ENCODE measurements at regions of chr14 and their contacts with region 1.

Region 1: GRCh38 chr14:55191203-55192053 is at the start of gene DLGAP5:
- DNase-seq: peak; percentile 92 to 94
- H3K4me3 ChIP-seq: peak within 1 kb of the TSS; percentile 79
- H3K27ac ChIP-seq: no peak within 1 kb of the TSS
- H3K4me1 ChIP-seq: peaks cover 18% of the 10 kb centered on the region
- H3K27me3 ChIP-seq: no peaks in the 10 kb centered on the region
- CTCF ChIP-seq: no peak
- total RNA-seq, gene DLGAP5: 51.7 and 80.0 TPM in 2 replicates

Region 2: DNA sequence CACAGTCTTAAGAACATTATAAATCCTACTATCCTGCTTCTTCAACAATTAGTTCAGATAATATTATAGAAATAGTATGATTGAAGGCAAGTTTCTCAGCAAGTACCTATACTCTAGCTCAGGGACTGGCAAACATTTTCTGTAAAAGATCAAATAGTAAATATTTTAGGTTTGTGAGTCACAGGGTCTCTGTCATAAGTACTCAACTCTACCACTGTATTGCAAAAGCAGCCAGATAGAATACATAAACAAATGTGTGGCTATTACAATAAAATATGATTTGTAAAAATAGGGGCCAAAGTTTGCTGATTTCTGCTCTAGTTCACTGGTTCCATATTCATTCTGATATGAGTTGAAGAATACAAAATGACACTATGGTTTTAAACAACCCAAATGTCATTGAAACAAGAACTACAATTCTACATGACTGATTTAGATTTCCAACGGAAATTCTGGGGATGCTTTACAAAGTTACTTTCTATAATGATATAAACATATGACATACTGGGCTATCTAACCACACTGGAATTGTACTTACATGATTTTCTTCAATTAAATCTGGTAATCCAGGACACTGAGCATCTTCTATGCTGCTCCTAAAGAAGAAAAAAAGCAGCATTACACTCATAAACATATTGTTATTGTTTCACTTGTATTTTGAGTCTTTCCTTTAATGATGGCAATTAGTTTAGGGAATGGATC is 39.2 kb before region 1 on chr14:
- CTCF ChIA-PET with region 1: no interaction called
- POLR2A ChIA-PET with region 1: no interaction called
- intact Hi-C with region 1: no loop called
- DNase-seq: no peak
- H3K4me3 ChIP-seq: no peak overlapping the region
- H3K27ac ChIP-seq: no peak overlapping the region
- H3K4me1 ChIP-seq: no peaks in the 10 kb centered on the region
- H3K27me3 ChIP-seq: no peaks in the 10 kb centered on the region
- CTCF ChIP-seq: no peak

Region 3: GRCh38 chr14:55180434-55180833 is 11.0 kb before region 1 on chr14:
- CTCF ChIA-PET with region 1: no interaction called
- POLR2A ChIA-PET with region 1: interaction called, 11 read pairs
- intact Hi-C with region 1: no loop called
- DNase-seq: no peak
- H3K4me3 ChIP-seq: no peak overlapping the region
- H3K27ac ChIP-seq: no peak overlapping the region
- H3K4me1 ChIP-seq: no peaks in the 10 kb centered on the region
- H3K27me3 ChIP-seq: no peaks in the 10 kb centered on the region
- CTCF ChIP-seq: no peak

Region 4: GRCh38 chr14:55333711-55334485 is 142.5 kb after region 1 on chr14:
- CTCF ChIA-PET with region 1: interaction called, 10 read pairs
- POLR2A ChIA-PET with region 1: no interaction called
- intact Hi-C with region 1: no loop called
- DNase-seq: no peak
- H3K4me3 ChIP-seq: no peak overlapping the region
- H3K27ac ChIP-seq: no peak overlapping the region
- H3K4me1 ChIP-seq: peaks cover 36% of the 10 kb centered on the region
- H3K27me3 ChIP-seq: no peaks in the 10 kb centered on the region
- CTCF ChIP-seq: no peak

Region 5: DNA sequence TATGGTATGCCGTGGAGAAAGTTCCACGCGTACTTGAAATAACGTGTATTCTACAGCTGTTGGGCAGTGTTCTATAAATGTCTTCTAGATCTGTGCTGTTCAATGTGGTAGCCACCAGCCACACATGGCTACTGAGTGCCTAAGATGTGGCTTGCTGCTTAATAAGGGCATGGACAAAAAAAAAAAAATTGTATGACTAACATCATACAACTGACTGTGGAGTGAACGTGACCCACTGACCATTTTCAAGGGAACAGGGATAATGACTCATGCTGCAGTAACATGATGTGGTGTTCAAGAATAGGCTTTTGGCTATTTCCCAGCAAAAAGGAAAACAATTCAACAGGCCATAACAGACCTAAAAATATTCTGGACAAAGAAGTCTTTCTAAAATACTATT is 207.3 kb after region 1 on chr14:
- CTCF ChIA-PET with region 1: no interaction called
- POLR2A ChIA-PET with region 1: interaction called, 14 read pairs
- intact Hi-C with region 1: no loop called
- DNase-seq: peak; percentile 30 to 62
- H3K4me3 ChIP-seq: no peak overlapping the region
- H3K27ac ChIP-seq: peak overlapping the region; percentile 25; the same call in 1 of the 2 replicates
- H3K4me1 ChIP-seq: peaks cover 12% of the 10 kb centered on the region; the same call in 1 of the 2 replicates
- H3K27me3 ChIP-seq: no peaks in the 10 kb centered on the region
- CTCF ChIP-seq: no peak